ENCODE measurements at regions of chr3 and their contacts with region 1.

Region 1: GRCh38 chr3:100463002-100463401 is 29.4 kb upstream of the TMEM45A start:
- DNase-seq: no peak
- ATAC-seq: no peak
- H3K4me3 Mint-ChIP-seq: no peak overlapping the region
- H3K27ac Mint-ChIP-seq: no peak overlapping the region
- H3K4me1 Mint-ChIP-seq: no peaks in the 10 kb centered on the region
- H3K27me3 Mint-ChIP-seq: peaks cover 3% of the 10 kb centered on the region
- CTCF ChIP-seq: no peak

Region 2: GRCh38 chr3:100316641-100317069 is 146.3 kb before region 1 on chr3:
- CTCF ChIA-PET with region 1: no interaction called
- POLR2A ChIA-PET with region 1: no interaction called
- intact Hi-C with region 1: loop called (anchors 1 kb)
- DNase-seq: no peak
- ATAC-seq: peak; percentile 68
- H3K4me3 Mint-ChIP-seq: no peak overlapping the region
- H3K27ac Mint-ChIP-seq: no peak overlapping the region
- H3K4me1 Mint-ChIP-seq: peaks cover 2% of the 10 kb centered on the region
- H3K27me3 Mint-ChIP-seq: no peaks in the 10 kb centered on the region
- CTCF ChIP-seq: no peak

Region 3: GRCh38 chr3:100525753-100526612 is 63.0 kb after region 1 on chr3:
- CTCF ChIA-PET with region 1: no interaction called
- POLR2A ChIA-PET with region 1: no interaction called
- intact Hi-C with region 1: no loop called
- DNase-seq: no peak
- ATAC-seq: no peak
- H3K4me3 Mint-ChIP-seq: no peak overlapping the region
- H3K27ac Mint-ChIP-seq: no peak overlapping the region
- H3K4me1 Mint-ChIP-seq: no peaks in the 10 kb centered on the region
- H3K27me3 Mint-ChIP-seq: peaks cover 2% of the 10 kb centered on the region
- CTCF ChIP-seq: no peak

Region 4: GRCh38 chr3:100590114-100590839 is 127.3 kb after region 1 on chr3:
- CTCF ChIA-PET with region 1: interaction called, 9 read pairs
- POLR2A ChIA-PET with region 1: no interaction called
- intact Hi-C with region 1: loop called (anchors 1 kb)
- DNase-seq: no peak
- ATAC-seq: peak; percentile 92
- H3K4me3 Mint-ChIP-seq: no peak overlapping the region
- H3K27ac Mint-ChIP-seq: no peak overlapping the region
- H3K4me1 Mint-ChIP-seq: peaks cover 4% of the 10 kb centered on the region
- H3K27me3 Mint-ChIP-seq: peaks cover 2% of the 10 kb centered on the region
- CTCF ChIP-seq: peak; percentile 77

Region 5: DNA sequence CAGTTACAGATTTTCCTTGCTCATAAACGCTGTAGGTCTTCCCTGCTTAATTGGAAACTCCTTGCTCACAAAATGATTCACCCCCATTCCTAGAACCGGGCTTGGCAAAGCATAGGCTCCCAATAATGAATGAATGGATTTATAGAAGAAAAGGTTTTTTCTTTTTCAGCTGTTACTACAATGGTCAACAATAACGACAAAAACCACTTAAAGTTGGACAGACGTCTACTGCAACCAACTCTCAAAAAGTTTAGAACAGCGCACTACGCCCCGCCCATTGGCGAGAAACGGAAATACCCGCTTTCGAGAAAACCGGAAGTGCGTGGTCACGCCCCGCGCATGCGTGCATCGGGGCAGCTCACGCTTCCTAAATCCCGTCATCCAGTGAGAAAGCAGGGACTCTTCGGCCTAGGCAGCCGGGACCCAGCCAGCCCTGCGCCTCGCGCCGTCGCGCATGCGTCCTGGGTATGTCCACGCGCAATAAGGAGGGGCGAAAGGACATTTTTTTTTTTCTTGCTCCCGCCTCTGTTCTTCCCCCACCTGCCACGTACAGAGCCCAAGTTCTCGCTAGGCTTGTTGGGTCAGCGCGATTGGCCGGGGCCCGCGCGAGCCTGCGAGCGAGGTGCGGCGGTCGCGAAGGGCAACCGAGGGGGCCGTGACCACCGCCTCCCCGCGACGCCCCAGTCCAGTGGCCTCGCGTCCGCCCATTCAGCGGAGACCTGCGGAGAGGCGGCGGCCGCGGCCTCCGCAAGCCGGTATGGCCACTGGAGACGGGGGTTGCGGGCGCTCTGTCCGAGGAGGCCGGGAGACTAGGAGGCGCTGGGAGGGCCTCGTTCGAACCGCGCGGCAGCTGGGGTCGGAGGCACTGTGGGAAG is 246.2 kb after region 1 on chr3 and contains the start of gene TFG:
- CTCF ChIA-PET with region 1: no interaction called
- POLR2A ChIA-PET with region 1: no interaction called
- intact Hi-C with region 1: no loop called
- DNase-seq: peak; percentile 97
- ATAC-seq: peak; percentile 90
- H3K4me3 Mint-ChIP-seq: peak within 1 kb of the TSS; percentile 88
- H3K27ac Mint-ChIP-seq: peak within 1 kb of the TSS; percentile 92
- H3K4me1 Mint-ChIP-seq: peaks cover 40% of the 10 kb centered on the region
- H3K27me3 Mint-ChIP-seq: peaks cover 17% of the 10 kb centered on the region
- CTCF ChIP-seq: no peak
- total RNA-seq, gene TFG: 42.5 and 44.5 TPM in 2 replicates

Region 6: DNA sequence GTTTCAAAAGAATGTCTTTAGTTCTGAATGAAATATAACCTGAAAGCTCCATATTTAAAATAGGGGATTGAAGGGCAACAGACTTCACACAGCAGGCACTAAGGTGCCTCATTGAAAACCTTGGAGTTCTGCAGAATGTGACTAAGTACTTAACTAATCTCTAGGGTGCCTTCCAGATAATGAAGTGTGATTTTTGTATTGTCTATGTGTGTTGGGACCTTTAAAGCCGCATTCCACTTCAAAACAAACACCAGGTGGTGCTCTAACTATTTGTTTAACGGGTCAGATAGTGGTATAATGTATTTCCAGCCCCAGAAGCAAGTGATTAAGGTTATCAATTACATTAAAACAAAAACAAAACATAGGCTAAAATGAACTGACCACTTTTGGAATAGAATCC is 274.3 kb after region 1 on chr3:
- CTCF ChIA-PET with region 1: no interaction called
- POLR2A ChIA-PET with region 1: no interaction called
- intact Hi-C with region 1: loop called (anchors 10 kb)
- DNase-seq: no peak
- ATAC-seq: no peak
- H3K4me3 Mint-ChIP-seq: no peak overlapping the region
- H3K27ac Mint-ChIP-seq: no peak overlapping the region
- H3K4me1 Mint-ChIP-seq: no peaks in the 10 kb centered on the region
- H3K27me3 Mint-ChIP-seq: no peaks in the 10 kb centered on the region
- CTCF ChIP-seq: no peak

Region 7: DNA sequence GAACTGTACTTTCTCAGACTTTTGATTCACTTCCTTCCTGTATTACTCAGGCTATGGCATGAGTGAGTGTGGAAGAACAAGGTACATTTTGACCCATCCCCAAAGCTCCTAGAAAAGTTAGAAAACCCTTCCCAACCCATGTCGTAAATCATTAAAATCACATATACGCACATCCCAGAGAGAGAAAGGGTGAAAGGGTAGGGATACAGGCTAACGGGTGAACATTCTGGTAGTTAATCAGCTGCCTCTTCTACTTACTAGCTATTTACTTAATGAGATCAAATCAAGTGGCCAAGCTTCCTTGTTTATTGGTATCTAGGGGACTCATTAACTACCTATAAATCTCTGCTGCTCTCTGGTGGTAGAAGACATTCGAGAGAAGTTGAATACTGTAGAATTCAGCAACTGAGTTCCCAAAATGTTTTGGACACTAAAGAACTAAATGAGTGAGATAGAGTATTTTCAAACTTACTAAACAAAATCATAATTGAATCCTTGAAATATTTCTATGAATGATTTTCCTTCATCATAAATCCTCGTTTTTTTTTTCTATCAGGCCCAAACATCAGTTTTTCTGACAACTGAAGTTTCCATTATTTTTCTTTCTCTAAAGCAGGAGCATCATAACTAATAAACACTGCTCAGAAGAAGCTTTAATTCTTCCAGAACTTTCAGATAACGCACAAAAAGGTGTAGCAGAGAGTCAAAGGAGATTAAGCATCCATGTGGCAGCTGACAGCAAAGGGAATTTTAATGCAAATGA is 733.1 kb after region 1 on chr3:
- CTCF ChIA-PET with region 1: no interaction called
- POLR2A ChIA-PET with region 1: no interaction called
- intact Hi-C with region 1: loop called (anchors 5 kb)
- DNase-seq: no peak
- ATAC-seq: no peak
- H3K4me3 Mint-ChIP-seq: no peak overlapping the region
- H3K27ac Mint-ChIP-seq: no peak overlapping the region
- H3K4me1 Mint-ChIP-seq: no peaks in the 10 kb centered on the region
- H3K27me3 Mint-ChIP-seq: peaks cover 4% of the 10 kb centered on the region
- CTCF ChIP-seq: no peak

Region 8: DNA sequence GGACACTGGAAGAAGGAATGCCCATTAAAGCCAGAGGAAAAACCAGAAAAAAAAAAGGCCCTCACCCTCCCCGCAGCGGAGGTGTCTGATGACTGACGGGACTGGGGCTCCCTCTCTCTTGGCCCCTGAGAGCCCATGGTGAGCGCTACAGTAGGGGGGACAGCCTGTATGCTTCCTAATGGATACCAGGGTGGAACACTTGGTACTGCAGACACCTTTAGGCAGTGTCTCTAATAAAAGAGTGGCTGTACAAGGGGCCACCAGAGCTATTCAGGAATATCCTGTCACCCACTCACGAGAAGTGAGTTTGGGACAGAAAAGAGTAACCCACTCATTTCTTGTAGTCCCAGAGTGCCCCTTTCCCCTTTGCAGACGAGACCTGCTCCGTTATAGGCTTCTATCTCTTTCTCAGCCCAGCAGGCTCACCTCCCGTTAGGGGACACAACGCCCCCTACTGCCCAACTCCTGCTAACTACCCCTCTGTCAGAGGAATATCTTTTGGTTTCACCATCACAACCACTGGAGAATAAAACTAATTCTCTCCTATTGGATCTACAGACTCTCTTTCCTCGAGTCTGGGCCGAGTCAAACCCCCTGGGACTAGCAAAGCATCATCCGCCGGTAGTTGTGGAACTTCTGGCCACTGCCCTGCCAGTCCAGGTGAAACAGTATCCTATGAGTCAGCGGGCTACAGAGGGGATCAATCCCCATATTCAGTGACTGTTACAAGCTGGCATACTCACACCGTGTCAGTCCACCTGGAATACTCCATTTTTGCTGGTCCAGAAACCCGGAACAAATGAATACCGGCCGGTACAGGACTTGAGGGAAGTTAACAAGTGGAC is 1173.2 kb after region 1 on chr3:
- CTCF ChIA-PET with region 1: no interaction called
- POLR2A ChIA-PET with region 1: no interaction called
- intact Hi-C with region 1: loop called (anchors 5 kb)
- DNase-seq: peak; percentile 27
- ATAC-seq: peak; percentile 76
- H3K4me3 Mint-ChIP-seq: no peak overlapping the region
- H3K27ac Mint-ChIP-seq: no peak overlapping the region
- H3K4me1 Mint-ChIP-seq: peaks cover 2% of the 10 kb centered on the region
- H3K27me3 Mint-ChIP-seq: no peaks in the 10 kb centered on the region
- CTCF ChIP-seq: no peak

Measured in activated B cell treated with CpG ODN at 0.5 μM for 24 hours (primary cell).